H1 (cell line): ENCODE measurements at regions of chr16 and their contacts with region 1.

Region 1: DNA sequence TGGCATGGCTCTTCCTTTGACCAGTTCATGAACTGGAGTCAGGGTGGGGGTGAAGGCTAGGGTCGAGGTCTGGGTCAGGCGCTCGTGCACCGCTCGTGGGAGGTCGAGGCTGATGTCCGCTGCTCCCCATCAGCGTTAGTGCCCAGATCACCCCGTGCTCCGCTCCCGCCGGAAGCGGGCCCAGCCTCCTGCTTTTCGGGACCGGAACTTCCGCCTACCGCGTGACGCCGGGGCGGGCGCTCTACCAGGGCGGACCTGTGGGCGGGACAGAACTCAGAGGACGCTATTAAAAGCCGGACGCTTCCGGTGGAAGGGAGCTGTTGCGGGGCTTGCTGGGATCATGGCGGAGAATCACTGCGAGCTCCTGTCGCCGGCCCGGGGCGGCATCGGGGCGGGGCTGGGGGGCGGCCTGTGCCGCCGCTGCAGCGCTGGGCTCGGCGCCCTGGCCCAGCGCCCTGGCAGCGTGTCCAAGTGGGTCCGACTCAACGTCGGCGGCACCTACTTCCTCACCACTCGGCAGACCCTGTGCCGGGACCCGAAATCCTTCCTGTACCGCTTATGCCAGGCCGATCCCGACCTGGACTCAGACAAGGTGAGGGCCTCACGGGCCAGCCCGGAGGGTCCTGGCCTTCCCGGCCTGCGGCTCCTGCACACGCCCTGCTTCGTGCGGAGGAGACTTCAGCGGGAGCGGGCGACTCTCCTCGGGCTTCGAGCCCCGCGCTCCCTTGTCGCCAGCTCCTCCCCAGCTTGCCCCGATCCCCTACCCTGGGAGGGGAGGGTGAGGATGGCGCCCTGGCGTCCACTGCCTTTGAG is at the start of gene KCTD5:
- DNase-seq: peak; percentile 83 to 96
- H3K4me3 ChIP-seq: peak within 1 kb of the TSS; percentile 86 to 95 (median 93)
- H3K27ac ChIP-seq: peak within 1 kb of the TSS; percentile 62
- H3K4me1 ChIP-seq: no peaks in the 10 kb centered on the region
- H3K27me3 ChIP-seq: no peaks in the 10 kb centered on the region
- CTCF ChIP-seq: no peak
- EP300 ChIP-seq: peak in 1 of 2 experiments; percentile 87; a peak in 1 of 3 replicates
- POLR2A ChIP-seq: peak in 1 of 2 experiments; percentile 95; a peak in 2 of 3 replicates
- RAD21 ChIP-seq: peak in 1 of 2 experiments; percentile 2; a peak in 1 of 4 replicates
- total RNA-seq, gene KCTD5: 24.8 and 26.6 TPM in 2 replicates

Region 2: GRCh38 chr16:2692948-2693651 is 10.7 kb after region 1 on chr16:
- CTCF ChIA-PET with region 1: no interaction called
- POLR2A ChIA-PET with region 1: interaction called, 17 read pairs
- DNase-seq: no peak
- H3K4me3 ChIP-seq: no peak overlapping the region
- H3K27ac ChIP-seq: no peak overlapping the region
- H3K4me1 ChIP-seq: peaks cover 0 to 7% (median 5%) of the 10 kb centered on the region in 4 experiments; a peak in 6 of 7 replicates
- H3K27me3 ChIP-seq: no peaks in the 10 kb centered on the region
- CTCF ChIP-seq: no peak
- EP300 ChIP-seq: no peak
- POLR2A ChIP-seq: no peak
- RAD21 ChIP-seq: no peak